WTC11 (cell line): ENCODE measurements at regions of chr1 and their contacts with region 1.

Region 1: GRCh38 chr1:109643385-109644230 is 12.3 kb upstream of the GSTM4 start:
- DNase-seq: peak; percentile 97
- ATAC-seq: peak; percentile 93
- H3K4me3 Mint-ChIP-seq: no peak overlapping the region
- H3K27ac Mint-ChIP-seq: no peak overlapping the region
- H3K4me1 Mint-ChIP-seq: peaks cover 7% of the 10 kb centered on the region
- H3K27me3 Mint-ChIP-seq: peaks cover 5% of the 10 kb centered on the region; the same call in 1 of the 2 replicates
- CTCF ChIP-seq: peak; percentile 76; the same call in 1 of the 2 replicates

Region 2: GRCh38 chr1:109548321-109549267 is 95.0 kb before region 1 on chr1 and contains the start of gene GNAI3:
- CTCF ChIA-PET with region 1: interaction called, 129 read pairs
- POLR2A ChIA-PET with region 1: interaction called, 12 read pairs
- DNase-seq: peak; percentile 94
- ATAC-seq: peak; percentile 88
- H3K4me3 Mint-ChIP-seq: peak within 1 kb of the TSS; percentile 85
- H3K27ac Mint-ChIP-seq: peak within 1 kb of the TSS; percentile 94
- H3K4me1 Mint-ChIP-seq: peaks cover 25% of the 10 kb centered on the region
- H3K27me3 Mint-ChIP-seq: no peaks in the 10 kb centered on the region; the same call in 1 of the 2 replicates
- CTCF ChIP-seq: no peak
- total RNA-seq, gene GNAI3: 7.1 to 7.2 TPM (median 7.1 TPM) in 3 replicates

Region 3: GRCh38 chr1:109620841-109621286 is 22.7 kb before region 1 on chr1:
- CTCF ChIA-PET with region 1: interaction called, 43 read pairs
- POLR2A ChIA-PET with region 1: interaction called, 3 read pairs
- DNase-seq: peak; percentile 90
- ATAC-seq: peak; percentile 65
- H3K4me3 Mint-ChIP-seq: peak overlapping the region; percentile 97
- H3K27ac Mint-ChIP-seq: peak overlapping the region; percentile 92; the same call in 1 of the 2 replicates
- H3K4me1 Mint-ChIP-seq: peaks cover 47% of the 10 kb centered on the region
- H3K27me3 Mint-ChIP-seq: no peaks in the 10 kb centered on the region
- CTCF ChIP-seq: no peak

Region 4: GRCh38 chr1:109661391-109661790 is 17.8 kb after region 1 on chr1:
- CTCF ChIA-PET with region 1: interaction called, 45 read pairs
- POLR2A ChIA-PET with region 1: no interaction called
- DNase-seq: no peak
- ATAC-seq: no peak
- H3K4me3 Mint-ChIP-seq: no peak overlapping the region
- H3K27ac Mint-ChIP-seq: no peak overlapping the region
- H3K4me1 Mint-ChIP-seq: 0 out of 2 replicates have a peak, but pooled peaks cover 3% of the 10 kb centered on the region
- H3K27me3 Mint-ChIP-seq: no peaks in the 10 kb centered on the region; the same call in 1 of the 2 replicates
- CTCF ChIP-seq: no peak

Region 5: GRCh38 chr1:109718491-109718890 is 74.9 kb after region 1 on chr1:
- CTCF ChIA-PET with region 1: interaction called, 15 read pairs
- POLR2A ChIA-PET with region 1: no interaction called
- DNase-seq: no peak
- ATAC-seq: peak; percentile 68
- H3K4me3 Mint-ChIP-seq: no peak overlapping the region
- H3K27ac Mint-ChIP-seq: no peak overlapping the region
- H3K4me1 Mint-ChIP-seq: no peaks in the 10 kb centered on the region
- H3K27me3 Mint-ChIP-seq: no peaks in the 10 kb centered on the region; the same call in 1 of the 2 replicates
- CTCF ChIP-seq: no peak

Region 6: DNA sequence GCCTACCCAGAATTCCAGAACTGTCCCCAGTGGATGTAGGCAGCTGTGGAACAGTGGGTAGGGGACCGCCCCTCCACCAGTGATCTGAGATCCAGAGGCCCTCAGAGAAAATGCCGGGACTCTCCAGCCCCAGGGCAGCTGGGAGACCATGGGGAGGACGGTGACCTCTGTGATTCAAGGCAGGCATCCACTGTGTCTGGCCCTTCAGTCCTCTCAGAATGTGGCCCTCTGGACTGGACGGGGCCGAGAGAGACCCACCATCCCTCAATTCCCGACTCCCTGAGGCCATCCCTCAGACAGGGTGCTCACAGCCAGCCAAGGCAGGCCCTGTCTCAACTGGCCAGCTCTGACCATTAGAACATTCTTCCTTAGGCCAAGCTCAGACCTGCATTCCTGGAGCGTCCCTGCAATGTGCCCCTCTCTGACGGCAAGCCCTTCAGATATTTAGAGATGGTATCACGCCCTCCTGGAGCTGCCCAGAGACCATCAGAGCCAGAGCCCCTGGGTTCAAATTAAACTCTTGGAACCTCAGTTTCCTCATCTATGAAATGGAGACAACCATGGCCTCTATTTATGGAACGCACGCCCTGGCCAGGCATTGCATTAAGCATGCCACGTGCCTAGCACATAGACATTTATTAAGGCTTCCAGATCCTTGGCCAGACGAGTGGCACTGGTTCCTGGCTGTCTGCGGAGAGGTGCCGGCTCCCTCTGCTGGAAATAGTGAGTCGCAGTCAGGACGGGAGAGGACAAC is 129.7 kb after region 1 on chr1:
- CTCF ChIA-PET with region 1: interaction called, 188 read pairs
- POLR2A ChIA-PET with region 1: interaction called, 4 read pairs
- DNase-seq: peak; percentile 73
- ATAC-seq: peak; percentile 83
- H3K4me3 Mint-ChIP-seq: no peak overlapping the region
- H3K27ac Mint-ChIP-seq: no peak overlapping the region
- H3K4me1 Mint-ChIP-seq: peaks cover 5% of the 10 kb centered on the region
- H3K27me3 Mint-ChIP-seq: peaks cover 7% of the 10 kb centered on the region
- CTCF ChIP-seq: peak; percentile 38; the same call in 1 of the 2 replicates